Heart right ventricle (tissue), 16 donors: ENCODE measurements at regions of chr18 and their contacts with region 1.

Region 1: GRCh38 chr18:33627114-33627513 is 49.1 kb downstream of the ASXL3 start:
- DNase-seq: no peak
- ATAC-seq: no peak
- H3K4me3 ChIP-seq: no peak overlapping the region
- H3K27ac ChIP-seq: no peak overlapping the region
- H3K4me1 ChIP-seq: no peaks in the 10 kb centered on the region
- H3K27me3 ChIP-seq: no peaks in the 10 kb centered on the region
- CTCF ChIP-seq: no peak

Region 2: GRCh38 chr18:33560686-33561370 is 66.3 kb before region 1 on chr18:
- intact Hi-C with region 1: loop called in 1 of 10 experiments (anchors 10 kb)
- DNase-seq: no peak
- ATAC-seq: no peak
- H3K4me3 ChIP-seq: no peak overlapping the region
- H3K27ac ChIP-seq: no peak overlapping the region
- H3K4me1 ChIP-seq: no peaks in the 10 kb centered on the region
- H3K27me3 ChIP-seq: no peaks in the 10 kb centered on the region
- CTCF ChIP-seq: no peak